ENCODE measurements at regions of chr3 and their contacts with region 1.

Region 1: GRCh38 chr3:124905849-124906248 is 18.7 kb upstream of the ITGB5 start:
- DNase-seq: no peak

Region 2: GRCh38 chr3:124576565-124577493 is 329.0 kb before region 1 on chr3:
- intact Hi-C with region 1: loop called (anchors 10 kb)
- DNase-seq: no peak

Region 3: GRCh38 chr3:124761250-124761796 is 144.5 kb before region 1 on chr3:
- intact Hi-C with region 1: loop called (anchors 1 kb)
- DNase-seq: peak; percentile 59 to 96 (median 89)

Region 4: GRCh38 chr3:124860599-124860998 is 45.2 kb before region 1 on chr3:
- intact Hi-C with region 1: no loop called
- DNase-seq: peak in 5 of 42 donors; percentile 27 to 67 (median 47)

Measured in head of caudate nucleus (tissue), 42 donors.